Cardiac septum (tissue), 1 donor: ENCODE measurements at regions of chr1 and their contacts with region 1.

Region 1: GRCh38 chr1:48055876-48056764 is 58.9 kb upstream of the TRABD2B start:
- DNase-seq: no peak

Region 2: DNA sequence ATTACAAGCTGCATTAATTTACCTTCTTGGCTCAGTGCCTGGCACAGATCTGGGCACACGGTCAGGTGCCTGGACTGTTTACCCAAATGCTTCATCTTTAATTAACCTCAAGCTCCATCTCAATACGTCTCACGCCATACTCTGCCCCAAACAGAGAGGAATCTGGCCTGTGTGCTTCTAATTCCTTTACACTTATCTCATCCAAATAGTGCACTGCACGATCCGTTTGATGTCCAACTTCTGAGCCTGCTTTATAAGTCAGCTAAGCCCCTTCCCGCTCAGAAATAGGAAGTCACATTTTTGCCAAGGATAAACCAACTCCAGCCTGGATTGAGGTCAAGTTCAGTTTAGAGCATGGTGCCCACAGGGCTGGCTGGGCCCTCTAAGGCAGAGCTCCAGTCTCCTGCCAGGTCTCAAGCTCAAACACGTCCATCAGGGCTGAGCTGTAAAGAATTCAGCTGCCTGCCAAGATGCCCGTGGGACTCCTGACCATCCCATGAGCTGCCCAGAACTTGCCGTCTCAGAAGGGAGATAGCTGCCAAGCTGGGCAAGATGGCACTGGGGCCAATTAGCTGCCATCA is 292.4 kb before region 1 on chr1:
- intact Hi-C with region 1: loop called (anchors 10 kb)
- DNase-seq: no peak

Region 3: GRCh38 chr1:47991187-47991586 is 64.9 kb before region 1 on chr1:
- intact Hi-C with region 1: no loop called
- DNase-seq: no peak